ENCODE measurements at regions of chr17 and their contacts with region 1.

Region 1: DNA sequence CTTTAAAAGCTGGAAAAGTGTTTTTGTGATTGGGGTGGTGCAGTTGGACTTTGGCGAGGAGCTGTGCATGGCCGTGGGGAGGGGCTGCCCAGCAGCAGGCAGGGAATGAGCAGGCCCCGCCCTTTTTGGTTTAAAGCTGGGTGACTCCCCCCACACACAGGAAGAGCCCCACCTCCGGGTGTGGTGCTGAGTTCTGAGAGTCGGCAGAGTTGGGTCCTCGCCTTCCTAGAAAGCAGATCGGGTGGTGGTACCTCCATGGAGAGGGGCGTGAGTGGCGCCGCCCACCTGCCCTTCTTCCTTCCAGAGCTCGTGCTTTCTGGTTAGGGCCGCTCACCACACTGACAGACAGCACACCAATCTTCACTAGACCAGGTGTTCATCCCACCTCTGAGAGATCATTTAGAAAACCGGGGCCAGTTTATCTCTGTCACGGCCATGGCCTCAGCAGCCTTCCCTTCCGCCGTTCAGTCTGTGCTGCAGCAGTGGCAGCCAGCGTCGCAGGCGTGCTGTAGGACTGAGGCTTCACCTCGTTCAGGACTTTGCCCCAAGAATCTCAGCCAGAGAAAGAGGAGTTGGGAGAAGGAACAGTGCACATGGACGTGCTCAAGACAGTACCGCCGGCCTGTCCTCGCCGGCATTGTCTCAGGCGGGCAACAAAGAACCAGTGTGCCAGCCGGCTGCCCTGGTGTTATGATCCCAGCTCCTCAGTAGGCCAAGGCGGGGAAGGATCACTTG is 144.0 kb upstream of the CHMP6 start:
- DNase-seq: peak; percentile 74
- H3K4me3 Mint-ChIP-seq: peak overlapping the region; percentile 31
- H3K27ac Mint-ChIP-seq: peak overlapping the region; percentile 83
- H3K4me1 Mint-ChIP-seq: peaks cover 60% of the 10 kb centered on the region
- H3K27me3 Mint-ChIP-seq: no peaks in the 10 kb centered on the region

Region 2: DNA sequence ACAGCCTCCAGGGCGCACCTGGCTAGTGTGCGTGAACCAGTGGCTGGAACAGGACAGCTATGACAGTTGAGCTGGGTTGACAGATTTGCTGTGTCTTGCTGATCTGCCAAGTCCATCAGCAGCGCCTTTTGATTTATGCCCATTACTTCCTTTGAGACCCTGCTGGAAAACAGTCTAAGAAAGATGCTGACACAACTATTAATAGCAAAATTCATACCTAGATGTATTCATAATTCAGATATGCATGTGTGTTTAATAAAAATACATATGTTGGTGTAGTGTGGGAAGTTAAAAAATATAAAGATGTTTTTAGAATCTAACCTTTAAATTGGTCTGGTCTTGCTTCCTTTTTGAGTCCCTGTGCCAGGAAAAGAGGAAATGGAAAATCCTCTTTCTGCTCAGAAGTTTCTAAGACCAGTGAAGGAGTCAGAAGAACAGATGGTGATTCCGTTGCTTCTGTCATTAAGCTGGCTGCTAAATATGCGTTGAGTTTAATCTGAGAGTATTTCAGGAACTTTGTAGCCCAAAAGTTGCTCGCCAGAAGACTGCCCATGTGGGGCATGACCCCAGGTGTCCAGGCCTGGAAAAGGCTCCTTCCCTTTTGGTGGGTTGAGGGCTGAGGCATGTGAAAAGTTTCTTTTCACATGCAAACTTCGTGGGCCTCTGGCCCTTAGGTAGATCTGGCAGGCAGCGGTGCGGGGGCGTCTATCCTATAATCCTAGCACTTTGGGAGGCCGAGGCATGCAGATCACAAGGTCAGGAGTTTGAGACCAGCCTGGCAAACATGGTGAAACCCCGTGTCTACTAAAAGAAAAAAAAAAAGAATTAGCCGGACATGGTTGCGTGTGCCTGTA is 472.7 kb before region 1 on chr17:
- intact Hi-C with region 1: no loop called
- DNase-seq: no peak
- H3K4me3 Mint-ChIP-seq: no peak overlapping the region
- H3K27ac Mint-ChIP-seq: no peak overlapping the region
- H3K4me1 Mint-ChIP-seq: peaks cover 5% of the 10 kb centered on the region
- H3K27me3 Mint-ChIP-seq: no peaks in the 10 kb centered on the region

Region 3: DNA sequence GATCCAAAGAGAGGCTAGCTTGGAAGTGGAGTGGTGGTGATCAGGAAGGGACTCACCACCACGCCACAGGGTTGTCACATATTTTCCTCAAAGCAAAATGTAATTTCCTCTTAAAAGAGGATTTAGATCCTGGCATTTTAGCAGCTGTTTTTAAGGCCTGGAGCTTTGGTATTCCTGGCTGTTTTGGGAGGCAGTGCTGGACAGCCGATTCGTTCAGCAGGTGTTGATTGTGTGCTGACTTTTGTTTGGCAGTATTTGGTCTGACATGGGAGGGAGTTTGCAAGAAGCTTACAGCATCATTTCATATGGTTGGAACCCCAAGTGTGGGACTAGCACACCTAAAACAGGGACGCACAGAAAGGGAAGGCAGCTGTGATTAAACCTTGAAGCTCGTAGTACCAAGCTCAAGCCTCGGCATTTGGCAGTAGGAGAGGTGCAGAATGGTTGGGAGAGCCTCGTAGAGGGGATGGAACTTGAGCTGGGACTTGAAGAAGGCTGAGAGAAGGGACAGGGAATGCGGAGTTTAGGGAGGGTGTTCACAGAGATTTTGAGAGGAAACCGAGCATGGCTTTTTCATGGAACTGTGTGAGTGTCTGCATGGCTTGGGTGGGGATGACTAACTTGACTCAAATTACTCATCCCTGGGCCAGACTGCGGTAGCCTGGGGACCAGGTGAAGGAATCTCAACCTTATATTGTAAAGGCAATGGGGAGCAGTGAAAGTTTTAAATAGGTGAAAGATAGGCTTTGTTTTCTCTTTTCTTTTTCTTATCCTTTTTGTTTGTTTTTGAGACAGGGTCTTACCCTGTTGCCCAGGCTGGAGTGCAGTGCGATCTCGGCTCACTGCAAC is 250.7 kb before region 1 on chr17:
- intact Hi-C with region 1: no loop called
- DNase-seq: no peak
- H3K4me3 Mint-ChIP-seq: peak overlapping the region; percentile 40
- H3K27ac Mint-ChIP-seq: peak overlapping the region; percentile 1
- H3K4me1 Mint-ChIP-seq: peaks cover 60% of the 10 kb centered on the region
- H3K27me3 Mint-ChIP-seq: no peaks in the 10 kb centered on the region

Region 4: GRCh38 chr17:80832888-80833583 is 14.6 kb before region 1 on chr17:
- intact Hi-C with region 1: no loop called
- DNase-seq: peak; percentile 84
- H3K4me3 Mint-ChIP-seq: peak overlapping the region; percentile 76
- H3K27ac Mint-ChIP-seq: peak overlapping the region; percentile 91
- H3K4me1 Mint-ChIP-seq: peaks cover 60% of the 10 kb centered on the region
- H3K27me3 Mint-ChIP-seq: no peaks in the 10 kb centered on the region

Region 5: DNA sequence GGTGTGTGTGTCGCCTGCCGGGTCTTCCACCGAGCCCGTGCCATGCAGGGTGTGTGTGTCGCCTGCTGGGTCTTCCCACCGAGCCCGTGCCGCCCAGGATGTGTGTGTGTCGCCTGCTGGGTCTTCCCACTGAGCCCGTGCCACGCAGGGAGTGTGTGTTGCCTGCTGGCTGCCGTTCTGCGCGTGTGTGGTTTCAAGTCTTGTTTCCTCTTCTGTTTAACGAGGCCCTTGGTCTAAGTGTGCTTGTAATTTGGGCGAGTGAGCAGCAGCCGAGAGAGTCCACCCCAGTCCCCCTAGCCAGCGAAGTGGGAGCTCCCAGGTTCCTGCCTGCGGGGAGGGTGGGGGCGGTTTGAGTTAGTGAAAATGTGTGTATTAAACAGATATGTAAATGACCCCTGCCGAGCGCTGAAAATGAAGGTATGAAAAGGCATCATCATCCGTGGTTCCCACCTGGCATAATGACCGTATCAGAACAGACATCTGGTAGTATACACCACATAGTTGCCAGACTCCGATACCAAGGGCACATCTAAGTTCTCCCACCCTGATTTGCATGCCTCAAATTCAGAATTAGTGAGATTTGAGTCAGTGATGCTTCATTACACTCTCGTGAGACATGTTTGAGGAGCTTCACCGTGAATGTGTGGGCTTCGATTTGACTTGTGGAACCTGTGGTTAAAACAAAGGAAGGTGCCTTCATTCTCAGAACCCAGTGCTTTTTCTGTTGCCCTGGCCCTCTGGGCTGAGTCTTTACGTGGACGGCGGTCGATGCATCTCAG is 29.5 kb after region 1 on chr17:
- intact Hi-C with region 1: loop called (anchors 1 kb)
- DNase-seq: peak; percentile 64
- H3K4me3 Mint-ChIP-seq: peak overlapping the region; percentile 65
- H3K27ac Mint-ChIP-seq: peak overlapping the region; percentile 96
- H3K4me1 Mint-ChIP-seq: peaks cover 55% of the 10 kb centered on the region
- H3K27me3 Mint-ChIP-seq: no peaks in the 10 kb centered on the region

Region 6: GRCh38 chr17:80991645-80992076 is 144.0 kb after region 1 on chr17 and contains the start of gene CHMP6:
- intact Hi-C with region 1: no loop called
- DNase-seq: peak; percentile 67
- H3K4me3 Mint-ChIP-seq: peak within 1 kb of the TSS; percentile 83
- H3K27ac Mint-ChIP-seq: peak within 1 kb of the TSS; percentile 68
- H3K4me1 Mint-ChIP-seq: peaks cover 17% of the 10 kb centered on the region
- H3K27me3 Mint-ChIP-seq: peaks cover 5% of the 10 kb centered on the region
- total RNA-seq, gene CHMP6: 36.6 and 43.5 TPM in 2 replicates

Measured in activated T-helper 1 cell treated with anti-CD3 and anti-CD28 coated beads, Interleukin-12 subunit alpha, Interleukin-12 subunit beta, Interleukin-2, Interleukin-4 antibody, amounts not matched to agents 30 ng/mL and 10 ng/mL and 1 ng/mL, durations not matched to agents 14 hours and 24 hours and 36 hours (primary cell).